ENCODE measurements at regions of chr5 and their contacts with region 1.

Region 1: DNA sequence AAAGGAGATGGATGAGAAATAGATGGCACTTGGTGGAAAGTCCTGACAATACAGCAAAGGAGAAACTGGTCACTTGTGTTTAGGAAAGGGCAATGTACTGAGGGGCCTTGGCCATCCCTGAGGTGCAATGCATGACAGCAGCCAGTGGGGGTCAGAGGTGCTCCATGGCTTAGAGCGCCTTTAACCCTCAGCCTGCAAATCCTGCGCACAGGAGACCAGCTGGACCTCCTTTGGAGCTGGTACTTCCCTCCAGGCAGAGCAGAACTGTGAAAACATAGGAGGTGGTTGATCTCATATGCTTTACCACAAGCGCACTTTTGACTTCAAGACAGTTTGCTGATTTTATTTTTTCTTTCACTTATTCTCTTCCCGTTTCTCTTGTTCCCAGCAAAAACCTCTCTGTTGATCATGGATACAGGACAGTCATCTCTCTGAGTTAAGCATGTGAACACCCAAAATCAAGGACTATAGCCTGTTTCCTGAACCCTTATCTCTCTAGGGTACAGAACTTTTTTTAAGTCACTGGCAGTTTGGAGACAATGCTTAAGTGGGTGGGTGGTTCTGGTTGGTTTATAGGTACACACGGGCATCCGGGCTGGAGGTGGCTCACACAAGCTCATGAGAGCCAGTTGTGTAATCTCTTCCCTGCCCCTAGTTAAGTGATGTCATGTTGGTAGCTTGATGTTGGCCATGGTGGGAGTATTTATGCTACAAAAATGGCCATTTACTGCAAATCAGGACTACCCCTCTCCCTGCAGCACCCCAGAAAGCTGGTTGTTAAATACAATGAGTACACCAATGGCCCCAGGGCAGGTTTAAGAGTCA is 37.6 kb upstream of the ANKRD55 start:
- DNase-seq: peak; percentile 64
- H3K4me3 Mint-ChIP-seq: peak overlapping the region; percentile 0
- H3K27ac Mint-ChIP-seq: no peak overlapping the region
- H3K4me1 Mint-ChIP-seq: peaks cover 20% of the 10 kb centered on the region
- H3K27me3 Mint-ChIP-seq: no peaks in the 10 kb centered on the region

Region 2: DNA sequence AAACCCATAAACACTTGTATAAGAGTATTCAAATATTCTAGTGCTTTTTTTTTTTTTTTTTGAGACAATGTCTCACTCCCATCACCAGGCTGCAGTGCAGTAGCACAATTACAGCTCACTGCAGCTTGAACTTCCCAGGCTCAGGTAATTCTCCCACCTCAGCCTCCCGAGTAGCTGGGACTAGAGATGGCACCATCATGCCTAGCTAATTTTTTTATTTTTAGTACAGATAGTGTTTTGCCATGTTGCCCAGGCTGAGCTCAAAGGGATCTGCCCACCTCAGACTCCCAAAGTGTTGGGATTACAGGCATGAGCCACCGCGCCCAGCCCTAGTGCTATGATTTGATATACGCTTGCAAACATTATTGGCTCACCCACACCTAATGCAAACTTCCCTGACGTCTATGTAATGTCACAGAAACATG is 287.8 kb before region 1 on chr5:
- intact Hi-C with region 1: loop called (anchors 2 kb)
- DNase-seq: no peak
- H3K4me3 Mint-ChIP-seq: peak overlapping the region; percentile 5
- H3K27ac Mint-ChIP-seq: no peak overlapping the region
- H3K4me1 Mint-ChIP-seq: peaks cover 67% of the 10 kb centered on the region
- H3K27me3 Mint-ChIP-seq: no peaks in the 10 kb centered on the region

Region 3: GRCh38 chr5:56615361-56616153 is 344.8 kb after region 1 on chr5:
- intact Hi-C with region 1: loop called (anchors 10 kb)
- DNase-seq: no peak
- H3K4me3 Mint-ChIP-seq: no peak overlapping the region
- H3K27ac Mint-ChIP-seq: no peak overlapping the region
- H3K4me1 Mint-ChIP-seq: peaks cover 60% of the 10 kb centered on the region
- H3K27me3 Mint-ChIP-seq: no peaks in the 10 kb centered on the region

Region 4: GRCh38 chr5:56838409-56839039 is 567.7 kb after region 1 on chr5:
- intact Hi-C with region 1: loop called (anchors 1 kb)
- DNase-seq: no peak
- H3K4me3 Mint-ChIP-seq: peak overlapping the region; percentile 49
- H3K27ac Mint-ChIP-seq: peak overlapping the region; percentile 56
- H3K4me1 Mint-ChIP-seq: peaks cover 56% of the 10 kb centered on the region
- H3K27me3 Mint-ChIP-seq: no peaks in the 10 kb centered on the region

Measured in activated T-helper 2 cell treated with anti-CD3 and anti-CD28 coated beads, Interferon-gamma antibody, Interleukin-2, Interleukin-4, amounts not matched to agents 10 μg/mL and 5 μg/mL and 100 μg/mL, durations not matched to agents 14 hours and 24 hours and 36 hours (primary cell).